Panc1 (cell line): ENCODE measurements at regions of chr1 and their contacts with region 1.

Region 1: DNA sequence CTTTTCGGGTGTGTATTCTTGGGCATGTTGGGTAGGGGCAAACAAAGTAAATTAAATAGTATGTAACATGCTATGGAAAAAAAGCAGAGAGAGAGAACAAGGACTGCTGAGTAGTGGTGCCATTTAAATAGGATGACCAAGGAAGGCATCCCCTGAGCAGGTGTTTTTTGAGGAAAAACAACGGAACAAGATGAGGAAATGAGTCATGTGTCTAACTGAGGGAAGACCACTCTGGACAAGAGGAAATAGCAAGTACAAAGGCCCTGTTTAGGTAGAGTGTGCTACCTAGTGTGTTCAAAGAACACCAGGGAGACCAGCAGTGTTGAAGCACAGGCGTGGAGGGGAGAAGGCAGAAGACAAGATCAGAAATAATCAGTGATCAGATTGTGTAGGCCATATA is 20.1 kb upstream of the GUCA2A start:
- DNase-seq: no peak
- ATAC-seq: no peak
- H3K4me3 ChIP-seq: no peak overlapping the region
- H3K27ac ChIP-seq: no peak overlapping the region
- H3K4me1 ChIP-seq: no peaks in the 10 kb centered on the region
- H3K27me3 ChIP-seq: no peaks in the 10 kb centered on the region
- CTCF ChIP-seq: no peak

Region 2: GRCh38 chr1:42419126-42419863 is 234.7 kb after region 1 on chr1:
- CTCF ChIA-PET with region 1: no interaction called
- POLR2A ChIA-PET with region 1: interaction called, 10 read pairs
- in situ Hi-C with region 1: no loop called
- intact Hi-C with region 1: no loop called
- DNase-seq: no peak
- ATAC-seq: no peak
- H3K4me3 ChIP-seq: no peak overlapping the region
- H3K27ac ChIP-seq: no peak overlapping the region
- H3K4me1 ChIP-seq: no peaks in the 10 kb centered on the region
- H3K27me3 ChIP-seq: no peaks in the 10 kb centered on the region
- CTCF ChIP-seq: no peak